AG04450 (cell line): ENCODE measurements at regions of chr10 and their contacts with region 1.

Region 1: DNA sequence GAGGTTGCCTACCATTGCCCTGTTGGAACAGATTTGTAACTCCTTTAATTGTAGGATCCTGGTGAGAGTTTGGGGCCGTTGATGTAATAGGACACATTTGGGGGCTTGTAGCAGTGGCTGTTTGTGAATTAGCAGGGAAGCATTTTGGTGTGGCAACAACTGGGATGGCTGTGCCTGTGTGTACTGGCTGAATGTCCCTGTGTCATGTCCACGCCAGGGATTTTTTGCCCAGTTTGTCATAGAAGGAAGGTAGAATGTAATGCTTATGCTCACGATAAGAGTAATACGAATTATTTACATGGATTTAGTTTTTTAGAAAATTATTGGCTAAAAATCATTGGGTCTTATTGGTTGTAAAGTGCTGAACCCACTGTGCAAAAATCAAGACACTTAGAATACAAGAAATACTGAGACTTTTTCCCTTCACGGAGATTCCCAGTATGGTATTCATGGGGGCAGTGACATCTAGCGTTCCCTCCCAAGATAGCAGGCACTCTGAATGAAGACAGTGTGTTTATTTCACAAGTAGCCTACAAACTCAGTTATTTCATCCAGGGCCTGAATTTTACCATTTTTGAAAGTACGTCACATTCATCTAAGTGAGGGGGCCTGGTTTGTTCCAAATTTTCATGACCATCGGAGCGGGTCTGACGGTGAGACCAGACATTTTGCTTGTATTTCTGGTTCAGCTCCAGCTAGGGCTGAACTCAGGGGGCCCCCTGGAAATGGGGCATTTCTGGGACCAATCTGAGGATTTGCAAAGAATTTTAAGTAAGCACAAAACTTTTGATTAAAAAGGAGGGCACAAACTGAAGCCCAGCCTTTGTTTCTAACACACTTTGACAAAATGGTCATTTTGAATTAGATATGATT is 74.7 kb downstream of the CACNB2 start:
- DNase-seq: no peak
- H3K4me3 ChIP-seq: no peak overlapping the region
- H3K27ac ChIP-seq: no peak overlapping the region
- H3K27me3 ChIP-seq: no peaks in the 10 kb centered on the region
- CTCF ChIP-seq: peak; percentile 98

Region 2: GRCh38 chr10:17742918-17743317 is 472.0 kb before region 1 on chr10:
- CTCF ChIA-PET with region 1: interaction called, 10 read pairs
- POLR2A ChIA-PET with region 1: no interaction called
- DNase-seq: peak; percentile 15
- H3K4me3 ChIP-seq: peak overlapping the region; percentile 29; the same call in 1 of the 2 replicates
- H3K27ac ChIP-seq: no peak overlapping the region
- H3K27me3 ChIP-seq: no peaks in the 10 kb centered on the region
- CTCF ChIP-seq: peak; percentile 86

Region 3: GRCh38 chr10:17847585-17848296 is 367.2 kb before region 1 on chr10:
- CTCF ChIA-PET with region 1: interaction called, 153 read pairs
- POLR2A ChIA-PET with region 1: no interaction called
- DNase-seq: no peak
- H3K4me3 ChIP-seq: no peak overlapping the region
- H3K27ac ChIP-seq: no peak overlapping the region
- H3K27me3 ChIP-seq: peaks cover 2% of the 10 kb centered on the region
- CTCF ChIP-seq: peak; percentile 63

Region 4: DNA sequence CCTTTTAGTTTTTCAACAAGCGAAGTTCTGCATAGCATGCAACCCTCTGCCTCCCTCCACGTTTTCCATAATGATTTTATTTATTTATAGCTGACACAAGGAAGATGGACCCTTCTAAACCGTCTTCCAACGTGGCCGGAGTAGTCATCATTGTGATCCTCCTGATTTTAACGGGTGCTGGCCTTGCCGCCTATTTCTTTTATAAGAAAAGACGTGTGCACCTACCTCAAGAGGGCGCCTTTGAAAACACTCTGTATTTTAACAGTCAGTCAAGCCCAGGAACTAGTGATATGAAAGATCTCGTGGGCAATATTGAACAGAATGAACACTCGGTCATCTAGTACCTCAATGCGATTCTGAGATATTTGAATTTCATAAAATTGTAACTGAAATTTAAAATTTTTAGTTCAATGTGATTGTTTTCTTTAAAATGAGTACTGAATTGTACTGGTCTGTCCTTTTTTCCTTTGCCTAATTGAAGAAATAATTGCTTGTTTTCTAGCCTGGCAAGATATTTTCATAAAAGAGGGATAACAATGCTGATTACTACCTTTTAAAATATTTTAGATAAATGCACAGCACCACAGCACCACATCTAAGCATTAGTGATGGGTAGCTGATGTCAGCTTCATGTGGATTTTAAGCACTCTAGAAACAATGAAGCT is 304.7 kb before region 1 on chr10:
- CTCF ChIA-PET with region 1: interaction called, 19 read pairs
- POLR2A ChIA-PET with region 1: no interaction called
- DNase-seq: peak; percentile 16
- H3K4me3 ChIP-seq: no peak overlapping the region
- H3K27ac ChIP-seq: no peak overlapping the region
- H3K27me3 ChIP-seq: no peaks in the 10 kb centered on the region
- CTCF ChIP-seq: peak; percentile 65

Region 5: DNA sequence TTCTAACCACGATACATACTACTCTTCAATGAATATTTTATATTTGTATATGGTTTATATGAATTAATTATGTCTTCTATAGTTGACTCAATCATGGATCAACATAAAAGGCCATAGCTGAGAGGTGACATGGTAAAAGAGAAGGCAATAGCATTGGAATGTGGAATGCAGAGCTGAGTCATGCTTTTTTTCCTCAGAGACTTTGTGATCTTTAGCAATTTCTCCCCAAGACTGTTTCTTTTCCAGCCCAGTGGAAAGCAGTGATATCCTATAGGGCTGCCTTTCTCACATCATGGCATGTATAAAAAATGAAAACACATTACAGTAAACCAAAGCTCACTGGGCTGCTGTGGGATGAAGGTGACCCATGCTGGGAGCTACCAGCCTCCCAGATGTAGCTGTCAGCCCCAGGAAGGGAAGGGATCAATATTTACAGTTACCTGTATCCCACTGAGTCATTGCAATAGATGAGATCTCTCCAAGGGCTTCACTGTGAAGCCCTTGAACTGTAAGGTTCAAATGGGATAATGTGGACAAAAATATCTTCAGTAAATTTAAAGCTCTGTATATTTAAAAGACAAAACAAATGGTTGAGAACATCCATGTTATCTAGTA is 233.1 kb before region 1 on chr10:
- CTCF ChIA-PET with region 1: interaction called, 10 read pairs
- POLR2A ChIA-PET with region 1: no interaction called
- DNase-seq: peak; percentile 70
- H3K4me3 ChIP-seq: no peak overlapping the region
- H3K27ac ChIP-seq: peak overlapping the region; percentile 69
- H3K27me3 ChIP-seq: no peaks in the 10 kb centered on the region
- CTCF ChIP-seq: no peak

Region 6: GRCh38 chr10:18238870-18239485 is 24.1 kb after region 1 on chr10:
- CTCF ChIA-PET with region 1: interaction called, 31 read pairs
- POLR2A ChIA-PET with region 1: no interaction called
- DNase-seq: peak; percentile 39
- H3K4me3 ChIP-seq: no peak overlapping the region
- H3K27ac ChIP-seq: no peak overlapping the region
- H3K27me3 ChIP-seq: no peaks in the 10 kb centered on the region
- CTCF ChIP-seq: peak; percentile 82